Psoas muscle (tissue), 8 donors: ENCODE measurements at regions of chr5 and their contacts with region 1.

Region 1: GRCh38 chr5:156147251-156147947 is 179.6 kb upstream of the SGCD start:
- DNase-seq: no peak
- ATAC-seq: no peak
- H3K4me3 ChIP-seq: no peak overlapping the region
- H3K27ac ChIP-seq: no peak overlapping the region
- H3K4me1 ChIP-seq: no peaks in the 10 kb centered on the region
- H3K27me3 ChIP-seq: no peaks in the 10 kb centered on the region
- CTCF ChIP-seq: no peak

Region 2: DNA sequence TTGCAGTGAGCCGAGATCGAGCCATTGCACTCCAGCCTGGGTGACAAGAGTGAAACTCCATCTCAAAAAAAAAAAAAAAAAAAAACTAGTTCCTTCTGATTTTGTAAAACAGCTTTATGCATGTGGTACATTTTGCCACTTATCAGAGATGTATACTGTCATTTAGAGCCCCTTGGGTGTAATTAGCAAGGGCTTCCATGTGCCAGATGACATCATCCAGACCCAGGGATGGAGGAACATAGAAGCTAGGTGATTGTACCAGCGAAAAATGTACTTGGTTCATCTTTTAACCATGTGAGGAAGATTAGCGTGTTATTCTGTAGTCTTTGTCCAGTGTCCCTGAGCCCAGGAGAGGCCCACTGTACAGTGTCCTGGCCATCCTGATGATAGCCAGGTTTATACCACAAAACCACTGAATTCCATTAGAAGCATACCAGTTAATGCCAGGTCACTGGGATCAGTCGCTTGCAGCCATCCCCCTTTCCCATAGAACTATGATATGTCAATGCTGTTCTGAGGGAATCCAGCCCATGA is 59.8 kb before region 1 on chr5:
- intact Hi-C with region 1: loop called in 1 of 2 experiments (anchors 2 kb)
- DNase-seq: no peak
- ATAC-seq: no peak
- H3K4me3 ChIP-seq: no peak overlapping the region
- H3K27ac ChIP-seq: no peak overlapping the region
- H3K4me1 ChIP-seq: no peaks in the 10 kb centered on the region
- H3K27me3 ChIP-seq: no peaks in the 10 kb centered on the region
- CTCF ChIP-seq: no peak